ENCODE measurements at regions of chr19 and their contacts with region 1.

Region 1: DNA sequence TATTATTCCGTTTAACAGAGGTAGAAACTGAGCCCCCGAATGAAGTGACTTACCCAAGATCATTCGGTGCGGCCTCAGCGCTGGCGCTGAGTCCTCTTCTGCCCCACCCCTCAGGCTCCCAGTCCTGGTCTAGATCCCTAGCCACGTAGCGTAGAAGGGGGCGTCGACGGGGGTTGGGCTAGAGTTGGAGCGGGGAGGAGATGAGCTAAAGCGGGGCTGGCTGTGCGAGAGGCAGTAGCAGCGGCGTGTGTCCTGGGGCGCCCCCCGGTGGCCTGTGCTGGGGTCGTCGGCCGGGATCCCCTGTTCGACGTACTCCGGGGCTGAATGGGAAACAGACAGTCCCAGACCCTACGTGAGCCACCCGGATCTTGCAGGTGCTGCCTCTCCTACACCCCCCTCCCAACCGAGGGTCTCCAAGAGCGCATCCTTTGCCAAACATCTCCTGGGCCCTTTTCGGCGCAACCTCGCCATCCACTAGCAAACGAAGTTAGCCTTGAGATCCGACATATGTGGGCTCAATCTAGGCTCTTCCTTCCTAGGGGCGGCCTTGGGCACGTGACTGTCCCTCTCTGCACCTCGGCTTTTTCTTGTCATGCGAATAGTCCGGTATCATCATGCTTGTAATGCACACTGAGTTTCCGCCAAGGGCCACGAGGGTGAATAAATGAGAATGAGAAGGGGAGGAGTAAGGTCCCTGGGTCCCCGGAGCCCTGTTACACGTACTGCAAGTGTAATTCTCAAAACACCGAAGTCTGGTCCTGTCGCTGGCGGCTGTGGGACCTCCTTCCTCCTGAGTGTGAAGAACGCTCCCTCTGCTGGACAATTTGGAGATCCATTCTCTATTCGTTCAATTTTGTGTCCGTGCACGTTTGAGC is 47.7 kb downstream of the CYP4F22 start:
- DNase-seq: peak; percentile 98
- H3K4me3 Mint-ChIP-seq: peak overlapping the region; percentile 76
- H3K27ac Mint-ChIP-seq: peak overlapping the region; percentile 50
- H3K4me1 Mint-ChIP-seq: peaks cover 14% of the 10 kb centered on the region
- H3K27me3 Mint-ChIP-seq: no peaks in the 10 kb centered on the region

Region 2: GRCh38 chr19:15154002-15154612 is 401.9 kb before region 1 on chr19:
- CTCF ChIA-PET with region 1: interaction called, 8 read pairs
- intact Hi-C with region 1: loop called (anchors 1 kb)
- DNase-seq: peak; percentile 68
- H3K4me3 Mint-ChIP-seq: no peak overlapping the region
- H3K27ac Mint-ChIP-seq: no peak overlapping the region
- H3K4me1 Mint-ChIP-seq: peaks cover 5% of the 10 kb centered on the region
- H3K27me3 Mint-ChIP-seq: no peaks in the 10 kb centered on the region

Region 3: GRCh38 chr19:15264061-15264932 is 291.7 kb before region 1 on chr19:
- CTCF ChIA-PET with region 1: interaction called, 3 read pairs
- intact Hi-C with region 1: loop called (anchors 1 kb)
- DNase-seq: peak; percentile 82
- H3K4me3 Mint-ChIP-seq: no peak overlapping the region
- H3K27ac Mint-ChIP-seq: no peak overlapping the region
- H3K4me1 Mint-ChIP-seq: peaks cover 6% of the 10 kb centered on the region
- H3K27me3 Mint-ChIP-seq: no peaks in the 10 kb centered on the region

Region 4: DNA sequence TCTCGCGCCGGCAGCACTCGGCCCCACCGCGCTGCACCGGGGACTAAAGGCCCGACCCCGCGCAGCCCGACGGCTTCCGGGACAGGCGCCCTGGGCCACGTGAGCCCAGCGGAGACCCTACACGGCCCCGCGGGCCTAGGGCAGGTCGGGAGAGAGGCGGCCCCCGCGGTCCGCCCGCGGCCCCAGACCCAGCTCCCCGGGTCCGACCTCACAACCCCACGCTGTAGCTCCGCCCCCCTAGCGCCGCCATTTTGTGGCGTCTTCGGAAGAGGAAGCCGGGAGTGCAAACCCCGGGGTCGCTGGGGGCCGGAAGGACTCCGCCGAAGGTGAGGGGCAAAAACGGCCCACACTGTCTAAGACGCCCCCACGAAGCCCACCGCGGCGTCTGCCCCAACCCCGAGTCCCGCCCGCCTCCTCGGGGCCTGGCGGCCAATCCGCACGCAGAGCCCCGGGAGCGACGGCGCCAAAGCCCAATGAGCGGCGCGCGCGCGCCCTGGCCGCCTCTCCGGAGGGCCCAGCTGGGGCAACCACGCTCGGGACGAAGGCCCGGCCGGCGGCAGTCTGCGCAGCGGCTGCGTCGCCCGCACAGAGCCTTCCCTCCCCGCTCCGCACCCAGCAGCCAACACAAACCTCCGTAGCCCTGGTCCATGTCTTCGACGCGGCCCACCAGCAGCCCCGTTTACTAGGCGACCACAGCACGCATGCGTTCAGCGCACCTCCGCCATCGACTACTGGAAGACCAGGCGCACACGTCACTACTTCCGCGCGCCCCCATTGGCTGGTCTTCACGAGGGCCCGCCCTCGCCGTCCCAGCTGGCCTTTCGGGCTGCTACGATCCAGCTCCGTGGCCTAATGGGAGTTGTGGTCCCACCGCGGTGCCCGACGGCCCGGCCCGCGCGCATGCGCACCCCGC is 176.7 kb before region 1 on chr19 and contains the start of gene AKAP8:
- CTCF ChIA-PET with region 1: interaction called, 15 read pairs
- intact Hi-C with region 1: loop called (anchors 1 kb)
- DNase-seq: peak; percentile 98
- H3K4me3 Mint-ChIP-seq: peak within 1 kb of the TSS; percentile 93
- H3K27ac Mint-ChIP-seq: peak within 1 kb of the TSS; percentile 96
- H3K4me1 Mint-ChIP-seq: peaks cover 48% of the 10 kb centered on the region
- H3K27me3 Mint-ChIP-seq: no peaks in the 10 kb centered on the region
- total RNA-seq, gene AKAP8: 27.1 to 30.3 TPM

Region 5: GRCh38 chr19:15432629-15433518 is 123.1 kb before region 1 on chr19:
- CTCF ChIA-PET with region 1: interaction called, 9 read pairs
- intact Hi-C with region 1: loop called (anchors 5 kb)
- DNase-seq: peak; percentile 93
- H3K4me3 Mint-ChIP-seq: peak overlapping the region; percentile 95
- H3K27ac Mint-ChIP-seq: peak overlapping the region; percentile 90
- H3K4me1 Mint-ChIP-seq: peaks cover 29% of the 10 kb centered on the region
- H3K27me3 Mint-ChIP-seq: no peaks in the 10 kb centered on the region

Region 6: GRCh38 chr19:15479391-15480345 is 76.3 kb before region 1 on chr19 and contains the start of gene PGLYRP2:
- CTCF ChIA-PET with region 1: interaction called, 7 read pairs
- intact Hi-C with region 1: loop called (anchors 1 kb)
- DNase-seq: peak; percentile 35
- H3K4me3 Mint-ChIP-seq: no peak within 1 kb of the TSS
- H3K27ac Mint-ChIP-seq: no peak within 1 kb of the TSS
- H3K4me1 Mint-ChIP-seq: peaks cover 34% of the 10 kb centered on the region
- H3K27me3 Mint-ChIP-seq: no peaks in the 10 kb centered on the region
- total RNA-seq, gene PGLYRP2: 0.07 TPM

Region 7: DNA sequence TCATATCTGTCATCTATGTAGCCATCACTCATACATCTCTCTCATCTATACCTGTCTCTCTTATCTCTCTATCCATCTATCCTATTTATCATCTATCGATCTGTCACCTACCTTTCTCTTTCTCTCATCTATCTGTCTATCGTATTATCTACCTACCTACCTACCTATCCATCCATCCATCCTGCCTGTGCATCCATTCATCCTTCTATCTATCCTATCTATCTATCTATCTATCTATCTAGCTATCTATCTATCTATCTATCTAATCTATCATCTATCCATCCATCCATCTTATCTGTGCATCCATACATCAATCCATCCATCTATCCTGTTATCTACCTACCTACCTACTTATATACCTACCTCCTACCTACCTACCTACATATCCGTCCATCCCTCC is 14.4 kb after region 1 on chr19:
- CTCF ChIA-PET with region 1: no interaction called
- intact Hi-C with region 1: no loop called
- DNase-seq: no peak
- H3K4me3 Mint-ChIP-seq: no peak overlapping the region
- H3K27ac Mint-ChIP-seq: no peak overlapping the region
- H3K4me1 Mint-ChIP-seq: peaks cover 2% of the 10 kb centered on the region
- H3K27me3 Mint-ChIP-seq: peaks cover 10% of the 10 kb centered on the region

Region 8: GRCh38 chr19:15614507-15615379 is 58.7 kb after region 1 on chr19 and contains the start of gene CYP4F8:
- CTCF ChIA-PET with region 1: no interaction called
- intact Hi-C with region 1: no loop called
- DNase-seq: no peak
- H3K4me3 Mint-ChIP-seq: no peak within 1 kb of the TSS
- H3K27ac Mint-ChIP-seq: no peak within 1 kb of the TSS
- H3K4me1 Mint-ChIP-seq: no peaks in the 10 kb centered on the region
- H3K27me3 Mint-ChIP-seq: peaks cover 19% of the 10 kb centered on the region
- total RNA-seq, gene CYP4F8: not detected

Measured in activated naive CD4-positive, alpha-beta T cell treated with anti-CD3 and anti-CD28 coated beads for 36 hours (primary cell).